ENCODE measurements at regions of chr20 and their contacts with region 1.

Region 1: DNA sequence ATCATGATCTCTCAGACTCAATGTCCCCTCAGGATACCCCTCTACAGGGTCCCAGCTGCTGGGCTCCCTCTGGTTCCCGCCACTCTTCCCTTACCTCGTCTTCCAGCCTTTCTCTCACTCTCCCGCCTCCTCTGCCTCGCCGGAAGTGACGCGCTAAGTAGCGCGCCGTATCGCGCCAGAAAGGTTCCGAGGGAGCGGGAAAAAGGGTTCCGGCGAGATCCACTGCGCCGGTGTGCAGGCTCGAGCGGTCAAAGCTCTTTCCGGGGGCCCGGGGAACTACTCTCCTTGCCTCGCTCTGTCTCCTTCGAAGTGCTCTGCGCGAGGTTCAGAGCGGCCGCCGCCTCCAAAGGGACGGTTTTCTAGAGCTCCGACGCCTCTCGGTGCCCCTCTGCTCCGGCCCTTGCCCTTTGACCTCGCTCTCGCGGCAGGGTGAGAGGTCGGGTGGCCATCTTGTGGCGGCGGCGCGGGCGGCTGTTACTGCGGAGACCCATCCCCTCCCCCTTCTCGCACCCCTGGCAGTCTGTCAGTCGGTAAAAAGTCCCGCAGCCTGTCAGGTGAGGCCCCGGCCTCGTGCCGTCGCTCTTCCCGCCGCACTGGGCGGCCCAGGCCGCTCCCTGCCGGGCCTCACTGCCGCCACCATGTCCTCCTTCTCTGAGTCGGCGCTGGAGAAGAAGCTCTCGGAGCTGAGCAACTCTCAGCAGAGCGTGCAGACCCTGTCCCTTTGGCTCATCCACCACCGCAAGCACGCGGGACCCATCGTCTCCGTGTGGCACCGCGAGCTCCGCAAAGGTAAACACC is at the starts of genes RPRD1B and TTI1:
- DNase-seq: peak; percentile 87
- H3K4me3 Mint-ChIP-seq: peak within 1 kb of the TSS; percentile 96
- H3K27ac Mint-ChIP-seq: peak within 1 kb of the TSS; percentile 99
- H3K4me1 Mint-ChIP-seq: peaks cover 72% of the 10 kb centered on the region
- H3K27me3 Mint-ChIP-seq: no peaks in the 10 kb centered on the region
- total RNA-seq, gene RPRD1B: 48.8 and 49.7 TPM in 2 replicates
- total RNA-seq, gene TTI1: 41.7 and 43.1 TPM in 2 replicates

Region 2: DNA sequence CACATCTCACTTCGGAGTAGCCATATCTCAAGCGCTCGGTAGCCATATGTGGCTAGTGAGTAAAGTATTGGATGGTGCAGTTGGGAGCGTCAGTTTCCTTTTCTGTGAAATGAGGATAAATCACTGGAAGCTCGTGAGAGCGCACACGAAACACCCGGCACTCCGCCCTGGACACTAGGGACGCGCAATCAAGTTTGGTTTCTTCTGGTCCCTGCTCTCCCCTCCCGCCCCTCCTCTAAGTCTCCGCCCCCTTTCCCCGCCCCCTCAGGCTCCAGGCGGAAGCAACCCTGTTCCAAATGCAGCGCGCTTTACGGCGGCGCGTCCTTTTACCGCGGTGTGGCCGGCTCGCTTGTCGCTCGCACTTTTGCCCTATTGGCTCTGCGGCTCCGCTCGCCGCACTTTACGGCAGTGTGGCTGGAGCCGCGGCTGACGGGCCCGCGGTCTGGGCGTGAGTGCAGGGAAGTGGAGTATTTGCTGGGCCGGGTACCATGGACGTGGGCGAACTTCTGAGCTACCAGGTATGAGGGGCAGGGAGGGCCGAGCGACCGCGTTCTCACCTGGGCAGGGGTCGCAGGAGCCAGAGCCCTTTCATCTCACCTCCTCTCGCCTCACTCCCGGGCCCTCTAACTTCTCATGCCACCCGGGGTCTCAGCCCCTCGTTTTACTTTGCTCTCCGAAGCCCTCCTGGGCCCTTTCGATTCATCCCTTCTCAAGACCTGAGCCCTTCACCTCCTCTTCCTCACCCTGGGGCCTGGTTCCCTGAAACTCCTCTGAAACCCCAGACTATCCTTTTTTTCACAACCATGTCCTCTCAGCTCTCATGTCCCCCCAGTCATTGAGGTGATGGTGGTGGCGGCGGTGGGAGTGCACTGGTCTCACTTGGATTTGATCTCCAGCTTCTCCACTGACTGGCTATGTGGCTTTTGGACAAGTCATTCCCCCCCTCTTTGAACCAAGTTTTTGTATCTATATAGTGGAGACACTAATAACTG is 339.6 kb before region 1 on chr20 and contains the start of gene CTNNBL1:
- intact Hi-C with region 1: loop called (anchors 1 kb)
- DNase-seq: peak; percentile 95
- H3K4me3 Mint-ChIP-seq: peak within 1 kb of the TSS; percentile 96
- H3K27ac Mint-ChIP-seq: peak within 1 kb of the TSS; percentile 92
- H3K4me1 Mint-ChIP-seq: peaks cover 27% of the 10 kb centered on the region
- H3K27me3 Mint-ChIP-seq: peaks cover 7% of the 10 kb centered on the region
- total RNA-seq, gene CTNNBL1: 93.5 and 105 TPM in 2 replicates

Region 3: GRCh38 chr20:37741055-37741454 is 292.5 kb before region 1 on chr20:
- intact Hi-C with region 1: no loop called
- DNase-seq: no peak
- H3K4me3 Mint-ChIP-seq: no peak overlapping the region
- H3K27ac Mint-ChIP-seq: no peak overlapping the region
- H3K4me1 Mint-ChIP-seq: peaks cover 18% of the 10 kb centered on the region
- H3K27me3 Mint-ChIP-seq: no peaks in the 10 kb centered on the region

Region 4: GRCh38 chr20:38001173-38001872 is 32.2 kb before region 1 on chr20:
- intact Hi-C with region 1: loop called (anchors 2 kb)
- DNase-seq: no peak
- H3K4me3 Mint-ChIP-seq: no peak overlapping the region
- H3K27ac Mint-ChIP-seq: peak overlapping the region; percentile 55
- H3K4me1 Mint-ChIP-seq: peaks cover 36% of the 10 kb centered on the region
- H3K27me3 Mint-ChIP-seq: no peaks in the 10 kb centered on the region

Region 5: DNA sequence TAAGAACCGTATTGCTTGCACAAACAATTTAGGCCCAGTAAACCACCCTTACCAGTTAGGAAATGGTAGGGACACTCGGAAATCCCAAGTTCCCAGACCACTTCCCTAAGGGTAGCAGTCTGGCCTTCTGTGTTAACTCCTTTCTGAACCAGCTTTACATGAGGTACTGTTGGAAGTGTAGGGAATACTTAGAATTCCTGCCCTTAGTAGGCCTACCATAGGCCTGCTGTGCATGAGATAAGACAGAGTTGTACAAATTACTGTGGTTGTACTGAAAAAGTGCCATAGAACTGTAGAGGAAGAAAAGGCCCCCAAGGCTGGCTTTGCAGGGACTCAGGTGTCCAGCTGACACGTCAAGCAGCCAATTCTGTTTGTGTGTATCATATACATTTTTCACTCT is 11.2 kb after region 1 on chr20:
- intact Hi-C with region 1: loop called (anchors 1 kb)
- DNase-seq: no peak
- H3K4me3 Mint-ChIP-seq: no peak overlapping the region
- H3K27ac Mint-ChIP-seq: no peak overlapping the region
- H3K4me1 Mint-ChIP-seq: peaks cover 37% of the 10 kb centered on the region
- H3K27me3 Mint-ChIP-seq: no peaks in the 10 kb centered on the region

Region 6: GRCh38 chr20:38057351-38057972 is 24.0 kb after region 1 on chr20:
- intact Hi-C with region 1: loop called (anchors 1 kb)
- DNase-seq: peak; percentile 56
- H3K4me3 Mint-ChIP-seq: no peak overlapping the region
- H3K27ac Mint-ChIP-seq: peak overlapping the region; percentile 59
- H3K4me1 Mint-ChIP-seq: peaks cover 30% of the 10 kb centered on the region
- H3K27me3 Mint-ChIP-seq: no peaks in the 10 kb centered on the region

Region 7: DNA sequence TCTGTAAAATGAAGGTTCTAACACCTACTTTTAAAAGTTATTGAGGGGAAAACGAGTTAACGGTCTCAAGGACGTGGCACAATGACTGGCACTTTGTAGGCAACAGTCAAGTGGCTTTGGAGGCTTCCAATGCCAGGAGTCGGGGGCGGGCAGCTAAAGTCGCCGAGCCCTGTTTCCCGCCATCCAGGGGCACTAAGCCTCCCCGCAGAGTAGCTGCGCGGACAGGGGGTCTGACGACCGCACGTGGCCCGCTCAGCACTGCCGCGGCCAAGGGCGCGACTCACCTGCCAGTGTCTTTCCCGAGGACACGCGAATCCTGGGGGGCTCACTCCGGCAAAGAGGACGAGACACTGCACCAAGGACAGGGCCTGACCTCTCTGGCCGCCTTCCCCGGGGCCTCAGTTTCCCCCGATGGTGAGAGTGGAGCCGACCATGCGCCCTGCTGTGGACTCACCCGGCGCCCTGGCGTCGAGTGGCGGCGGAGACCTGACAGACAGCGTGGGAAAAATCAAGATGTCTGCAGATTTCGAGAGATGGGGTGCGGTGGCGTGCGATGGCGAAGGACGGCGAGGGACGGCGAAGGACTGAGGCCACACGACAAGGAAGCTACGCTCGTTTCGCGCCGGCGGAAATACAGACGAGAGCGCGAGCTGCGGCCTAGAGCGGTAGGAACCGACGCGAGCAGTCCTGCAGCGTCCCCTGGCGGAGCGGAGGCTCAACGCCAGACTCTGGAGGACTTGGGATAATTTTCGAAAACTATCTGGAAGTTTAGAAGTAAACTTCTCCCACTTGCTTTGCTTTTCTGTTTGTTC is 401.4 kb after region 1 on chr20 and contains the start of gene SNHG17:
- intact Hi-C with region 1: loop called (anchors 10 kb)
- DNase-seq: peak; percentile 84
- H3K4me3 Mint-ChIP-seq: peak within 1 kb of the TSS; percentile 96
- H3K27ac Mint-ChIP-seq: peak within 1 kb of the TSS; percentile 96
- H3K4me1 Mint-ChIP-seq: peaks cover 25% of the 10 kb centered on the region
- H3K27me3 Mint-ChIP-seq: peaks cover 5% of the 10 kb centered on the region
- total RNA-seq, gene SNHG17: 89.8 and 104 TPM in 2 replicates

Region 8: GRCh38 chr20:38472513-38473372 is 439.2 kb after region 1 on chr20 and contains the start of gene RALGAPB:
- intact Hi-C with region 1: loop called (anchors 1 kb)
- DNase-seq: peak; percentile 97
- H3K4me3 Mint-ChIP-seq: peak within 1 kb of the TSS; percentile 88
- H3K27ac Mint-ChIP-seq: peak within 1 kb of the TSS; percentile 77
- H3K4me1 Mint-ChIP-seq: peaks cover 34% of the 10 kb centered on the region
- H3K27me3 Mint-ChIP-seq: peaks cover 2% of the 10 kb centered on the region
- total RNA-seq, gene RALGAPB: 31.0 and 32.4 TPM in 2 replicates